Posterior cingulate gyrus (tissue), 11 donors: ENCODE measurements at regions of chr1 and their contacts with region 1.

Region 1: GRCh38 chr1:228483789-228484188 is 3.4 kb upstream of the RNF187 start:
- DNase-seq: no peak

Region 2: GRCh38 chr1:228393248-228393699 is 90.5 kb before region 1 on chr1:
- intact Hi-C with region 1: no loop called
- DNase-seq: peak in 3 of 10 donors; percentile 32 to 92 (median 81)

Region 3: GRCh38 chr1:228465571-228466146 is 18.1 kb before region 1 on chr1:
- intact Hi-C with region 1: loop called (anchors 2 kb)
- DNase-seq: no peak